ENCODE measurements at regions of chr18 and their contacts with region 1.

Region 1: GRCh38 chr18:33467531-33467930 is 27.0 kb upstream of the CCDC178 start:
- DNase-seq: no peak
- H3K4me3 Mint-ChIP-seq: no peak overlapping the region
- H3K27ac Mint-ChIP-seq: no peak overlapping the region
- H3K4me1 Mint-ChIP-seq: no peaks in the 10 kb centered on the region
- H3K27me3 Mint-ChIP-seq: no peaks in the 10 kb centered on the region

Region 2: GRCh38 chr18:33427549-33427948 is 40.0 kb before region 1 on chr18:
- CTCF ChIA-PET with region 1: no interaction called
- intact Hi-C with region 1: loop called (anchors 1 kb)
- DNase-seq: no peak
- H3K4me3 Mint-ChIP-seq: no peak overlapping the region
- H3K27ac Mint-ChIP-seq: no peak overlapping the region
- H3K4me1 Mint-ChIP-seq: no peaks in the 10 kb centered on the region
- H3K27me3 Mint-ChIP-seq: no peaks in the 10 kb centered on the region

Region 3: GRCh38 chr18:33821503-33821902 is 354.0 kb after region 1 on chr18:
- CTCF ChIA-PET with region 1: no interaction called
- intact Hi-C with region 1: no loop called
- DNase-seq: no peak
- H3K4me3 Mint-ChIP-seq: no peak overlapping the region
- H3K27ac Mint-ChIP-seq: no peak overlapping the region
- H3K4me1 Mint-ChIP-seq: no peaks in the 10 kb centered on the region
- H3K27me3 Mint-ChIP-seq: peaks cover 4% of the 10 kb centered on the region

Measured in activated naive CD4-positive, alpha-beta T cell treated with anti-CD3 and anti-CD28 coated beads for 36 hours (primary cell).